Activated naive CD4-positive, alpha-beta T cell treated with anti-CD3 and anti-CD28 coated beads for 36 hours (primary cell): ENCODE measurements at regions of chr3 and their contacts with region 1.

Region 1: GRCh38 chr3:69306239-69307185 is 79.4 kb downstream of the FRMD4B start:
- DNase-seq: peak; percentile 82
- H3K4me3 Mint-ChIP-seq: no peak overlapping the region
- H3K27ac Mint-ChIP-seq: peak overlapping the region; percentile 23
- H3K4me1 Mint-ChIP-seq: peaks cover 24% of the 10 kb centered on the region
- H3K27me3 Mint-ChIP-seq: no peaks in the 10 kb centered on the region

Region 2: GRCh38 chr3:68943753-68944500 is 362.6 kb before region 1 on chr3:
- CTCF ChIA-PET with region 1: no interaction called
- intact Hi-C with region 1: no loop called
- DNase-seq: no peak
- H3K4me3 Mint-ChIP-seq: no peak overlapping the region
- H3K27ac Mint-ChIP-seq: no peak overlapping the region
- H3K4me1 Mint-ChIP-seq: no peaks in the 10 kb centered on the region
- H3K27me3 Mint-ChIP-seq: peaks cover 13% of the 10 kb centered on the region

Region 3: GRCh38 chr3:69129531-69129930 is 177.0 kb before region 1 on chr3:
- CTCF ChIA-PET with region 1: interaction called, 10 read pairs
- intact Hi-C with region 1: no loop called
- DNase-seq: no peak
- H3K4me3 Mint-ChIP-seq: no peak overlapping the region
- H3K27ac Mint-ChIP-seq: no peak overlapping the region
- H3K4me1 Mint-ChIP-seq: no peaks in the 10 kb centered on the region
- H3K27me3 Mint-ChIP-seq: peaks cover 4% of the 10 kb centered on the region

Region 4: GRCh38 chr3:69200384-69201068 is 106.0 kb before region 1 on chr3:
- CTCF ChIA-PET with region 1: interaction called, 43 read pairs
- intact Hi-C with region 1: loop called (anchors 1 kb)
- DNase-seq: peak; percentile 79
- H3K4me3 Mint-ChIP-seq: peak overlapping the region; percentile 75
- H3K27ac Mint-ChIP-seq: peak overlapping the region; percentile 96
- H3K4me1 Mint-ChIP-seq: peaks cover 68% of the 10 kb centered on the region
- H3K27me3 Mint-ChIP-seq: no peaks in the 10 kb centered on the region

Region 5: GRCh38 chr3:69250014-69250413 is 56.5 kb before region 1 on chr3:
- CTCF ChIA-PET with region 1: interaction called, 8 read pairs
- intact Hi-C with region 1: loop called (anchors 2 kb)
- DNase-seq: peak; percentile 86
- H3K4me3 Mint-ChIP-seq: peak overlapping the region; percentile 54
- H3K27ac Mint-ChIP-seq: peak overlapping the region; percentile 7
- H3K4me1 Mint-ChIP-seq: peaks cover 13% of the 10 kb centered on the region
- H3K27me3 Mint-ChIP-seq: no peaks in the 10 kb centered on the region

Region 6: DNA sequence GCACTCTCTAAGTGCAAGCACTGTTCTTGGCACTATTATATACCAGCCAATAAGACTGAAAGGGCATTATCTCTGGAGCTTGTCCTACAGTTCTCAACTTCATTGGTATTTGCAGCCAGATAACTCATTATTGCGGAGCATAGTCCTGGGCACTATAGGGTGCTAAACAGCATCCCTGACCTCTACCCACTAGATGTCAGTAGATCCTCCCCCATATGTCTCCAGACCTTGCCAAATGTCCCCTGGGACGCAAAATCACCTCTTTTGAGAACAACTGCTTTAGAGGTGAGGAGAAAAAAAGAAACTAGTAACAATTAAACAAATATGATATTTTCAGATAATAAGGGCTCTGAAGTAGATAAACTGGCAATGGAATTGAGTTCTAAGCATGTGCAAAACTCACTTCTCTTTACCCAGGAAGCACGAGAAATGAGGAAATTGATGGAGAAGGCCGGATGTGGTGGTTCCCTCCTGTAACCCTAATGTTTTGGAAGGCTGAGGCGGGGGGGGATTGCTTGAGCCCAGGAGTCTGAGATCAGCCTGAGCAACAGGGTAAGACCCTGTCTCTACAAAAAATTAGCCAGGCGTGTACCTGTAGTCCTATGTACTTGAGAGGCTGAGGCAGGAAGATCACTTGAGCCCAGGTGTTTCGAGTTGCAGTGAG is 18.0 kb after region 1 on chr3:
- CTCF ChIA-PET with region 1: interaction called, 22 read pairs
- intact Hi-C with region 1: loop called (anchors 1 kb)
- DNase-seq: peak; percentile 18
- H3K4me3 Mint-ChIP-seq: no peak overlapping the region
- H3K27ac Mint-ChIP-seq: no peak overlapping the region
- H3K4me1 Mint-ChIP-seq: peaks cover 43% of the 10 kb centered on the region
- H3K27me3 Mint-ChIP-seq: no peaks in the 10 kb centered on the region

Region 7: GRCh38 chr3:69354948-69355347 is 48.4 kb after region 1 on chr3:
- CTCF ChIA-PET with region 1: no interaction called
- intact Hi-C with region 1: no loop called
- DNase-seq: no peak
- H3K4me3 Mint-ChIP-seq: no peak overlapping the region
- H3K27ac Mint-ChIP-seq: no peak overlapping the region
- H3K4me1 Mint-ChIP-seq: peaks cover 12% of the 10 kb centered on the region
- H3K27me3 Mint-ChIP-seq: peaks cover 22% of the 10 kb centered on the region

Region 8: DNA sequence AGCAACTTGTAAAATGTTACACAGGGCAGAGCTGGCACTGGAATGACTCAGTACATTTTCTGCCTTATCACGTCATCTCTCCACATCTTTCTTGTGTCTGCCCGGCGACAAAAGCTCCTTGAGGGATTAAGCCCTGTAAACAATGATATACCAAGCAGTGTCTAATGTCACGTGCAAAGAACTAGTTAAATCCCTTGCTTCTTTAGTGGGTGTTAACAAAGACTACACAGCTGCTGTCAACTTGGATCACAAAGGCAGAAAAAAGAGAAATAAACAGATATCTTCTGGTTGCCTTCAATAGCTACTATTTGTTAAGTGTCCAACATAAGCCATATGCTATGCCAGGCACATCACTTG is 127.4 kb after region 1 on chr3:
- CTCF ChIA-PET with region 1: interaction called, 4 read pairs
- intact Hi-C with region 1: loop called (anchors 2 kb)
- DNase-seq: peak; percentile 36
- H3K4me3 Mint-ChIP-seq: no peak overlapping the region
- H3K27ac Mint-ChIP-seq: peak overlapping the region; percentile 19
- H3K4me1 Mint-ChIP-seq: peaks cover 40% of the 10 kb centered on the region
- H3K27me3 Mint-ChIP-seq: peaks cover 3% of the 10 kb centered on the region